Left cardiac atrium (tissue), 4 donors: ENCODE measurements at regions of chr1 and their contacts with region 1.

Region 1: GRCh38 chr1:220908757-220909156 is 29.5 kb downstream of the HLX start:
- DNase-seq: no peak
- ATAC-seq: peak in 1 of 2 donors; percentile 38

Region 2: DNA sequence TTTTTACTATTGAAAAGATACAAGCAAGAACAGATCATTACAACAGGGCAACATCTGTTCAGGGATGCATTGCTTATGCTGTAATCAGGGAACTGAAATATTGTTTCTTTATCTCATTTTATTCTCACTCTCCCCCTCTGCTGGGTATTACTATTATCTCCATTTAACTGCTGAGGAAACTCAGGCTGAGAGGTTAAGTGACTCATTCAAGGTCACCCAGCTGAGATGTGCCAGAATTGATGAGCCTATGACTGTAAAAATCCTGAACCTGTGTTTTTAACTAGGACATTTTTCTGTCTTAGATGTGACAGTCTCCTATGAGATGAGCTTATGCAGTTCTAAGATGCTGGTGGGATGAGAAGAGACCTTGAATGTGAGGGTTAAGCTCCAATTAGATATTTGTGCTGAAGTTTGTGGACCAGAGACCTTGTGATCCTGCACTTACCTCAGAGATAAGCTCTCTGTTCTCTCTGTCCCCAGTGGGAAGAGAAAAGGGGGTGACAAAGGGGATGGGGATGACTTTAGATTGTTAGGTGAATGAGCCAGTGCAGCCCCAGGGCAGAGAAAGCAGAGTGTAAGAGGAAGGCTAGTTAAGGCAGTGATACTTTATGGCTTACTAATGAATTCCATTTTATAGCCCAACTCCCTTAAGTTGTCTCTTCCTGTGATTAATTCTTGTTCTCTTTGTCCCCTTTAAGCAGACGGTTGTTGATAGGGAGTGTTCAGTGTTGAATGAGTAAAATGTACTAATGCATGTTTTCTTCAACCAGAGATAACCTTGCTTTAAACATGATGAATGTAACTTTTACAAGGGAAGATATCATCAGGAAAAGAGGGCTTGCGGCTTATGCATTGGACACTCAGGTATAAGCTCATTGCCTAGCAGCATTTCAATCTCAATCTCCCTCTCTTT is 81.9 kb after region 1 on chr1:
- intact Hi-C with region 1: no loop called
- DNase-seq: no peak
- ATAC-seq: peak in 1 of 2 donors; percentile 62

Region 3: DNA sequence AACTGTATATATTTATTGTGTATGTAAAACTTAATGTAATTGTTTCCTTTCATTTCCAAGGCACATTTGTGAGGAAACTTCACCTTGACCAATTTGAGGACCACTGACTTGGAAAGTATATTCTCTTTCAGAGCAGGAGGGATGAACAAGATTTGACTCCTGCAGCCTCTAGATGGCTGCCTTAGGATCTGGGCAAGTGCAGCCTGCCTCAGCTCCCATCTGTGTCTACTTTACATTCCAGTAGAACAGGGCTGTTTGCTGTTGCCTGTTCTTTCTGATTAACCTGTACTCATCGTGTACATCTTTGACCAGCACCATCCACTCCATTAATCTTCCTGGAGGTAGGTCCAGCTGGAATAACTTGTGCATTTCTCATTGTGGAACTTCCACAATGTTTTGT is 283.3 kb after region 1 on chr1:
- intact Hi-C with region 1: loop called in 1 of 2 experiments (anchors 10 kb)
- DNase-seq: no peak
- ATAC-seq: no peak

Region 4: GRCh38 chr1:221203224-221204054 is 294.7 kb after region 1 on chr1:
- intact Hi-C with region 1: loop called (anchors 2 to 10 kb)
- DNase-seq: peak; percentile 74
- ATAC-seq: peak; percentile 53 to 75